ENCODE measurements at regions of chr19 and their contacts with region 1.

Region 1: DNA sequence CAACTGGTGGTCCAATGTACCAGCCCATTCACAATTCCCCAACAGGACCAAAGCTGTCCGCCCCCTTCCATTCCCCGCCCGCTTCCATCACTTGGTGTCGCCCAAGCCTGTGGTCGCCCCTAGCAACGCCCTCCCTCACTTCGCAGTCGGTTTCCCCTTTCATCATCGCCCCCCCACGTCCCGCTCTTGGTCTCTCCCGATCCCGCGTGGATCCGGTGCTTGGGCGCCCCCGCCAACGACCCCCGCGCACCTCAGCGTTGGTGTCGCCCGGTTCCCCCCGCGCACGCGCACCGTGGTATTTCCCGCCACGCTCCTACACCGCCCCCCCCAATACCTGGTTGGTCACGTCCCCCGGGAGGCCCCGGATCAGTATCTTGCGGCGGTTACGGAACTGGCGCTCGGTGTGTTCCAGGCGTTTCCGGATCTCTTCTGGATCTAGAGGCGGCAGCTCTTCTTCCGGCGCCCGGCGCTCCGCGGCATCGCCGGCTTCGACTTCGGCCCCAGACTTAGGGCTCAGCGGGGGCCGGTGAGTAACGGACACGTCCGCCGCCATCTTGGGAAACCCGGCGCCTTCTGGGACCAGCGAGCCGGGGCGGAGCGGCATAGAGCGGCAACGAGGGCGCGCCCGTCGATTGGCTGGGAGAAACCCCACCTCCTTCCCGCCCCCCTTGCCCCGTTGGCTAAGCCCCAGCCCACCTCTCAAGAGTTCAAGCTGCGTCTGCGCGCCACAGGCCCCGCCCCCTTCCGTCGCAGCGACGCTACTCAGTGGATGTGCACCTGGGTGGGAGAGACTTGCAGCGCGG is at the start of gene RAVER1:
- DNase-seq: peak; percentile 96
- ATAC-seq: peak; percentile 96
- H3K4me3 Mint-ChIP-seq: peak within 1 kb of the TSS; percentile 96
- H3K27ac Mint-ChIP-seq: peak within 1 kb of the TSS; percentile 94
- H3K4me1 Mint-ChIP-seq: peaks cover 23% of the 10 kb centered on the region
- H3K27me3 Mint-ChIP-seq: no peaks in the 10 kb centered on the region
- total RNA-seq, gene RAVER1: 77.9 to 78.5 TPM

Region 2: GRCh38 chr19:10343495-10343894 is 10.3 kb after region 1 on chr19:
- POLR2A ChIA-PET with region 1: interaction called, 12 read pairs
- DNase-seq: no peak
- ATAC-seq: no peak
- H3K4me3 Mint-ChIP-seq: no peak overlapping the region
- H3K27ac Mint-ChIP-seq: no peak overlapping the region
- H3K4me1 Mint-ChIP-seq: peaks cover 12% of the 10 kb centered on the region
- H3K27me3 Mint-ChIP-seq: no peaks in the 10 kb centered on the region

Region 3: GRCh38 chr19:10363789-10364281 is 30.7 kb after region 1 on chr19:
- POLR2A ChIA-PET with region 1: no interaction called
- DNase-seq: no peak
- ATAC-seq: no peak
- H3K4me3 Mint-ChIP-seq: no peak overlapping the region
- H3K27ac Mint-ChIP-seq: no peak overlapping the region
- H3K4me1 Mint-ChIP-seq: peaks cover 6% of the 10 kb centered on the region
- H3K27me3 Mint-ChIP-seq: no peaks in the 10 kb centered on the region

Measured in activated naive CD8-positive, alpha-beta T cell treated with anti-CD3 and anti-CD28 coated beads, Interleukin-2, amount 10 ng/mL, durations not matched to agents 7 days and 5 days (primary cell).